Common myeloid progenitor, CD34-positive (primary cell): ENCODE measurements at regions of chr3 and their contacts with region 1.

Region 1: DNA sequence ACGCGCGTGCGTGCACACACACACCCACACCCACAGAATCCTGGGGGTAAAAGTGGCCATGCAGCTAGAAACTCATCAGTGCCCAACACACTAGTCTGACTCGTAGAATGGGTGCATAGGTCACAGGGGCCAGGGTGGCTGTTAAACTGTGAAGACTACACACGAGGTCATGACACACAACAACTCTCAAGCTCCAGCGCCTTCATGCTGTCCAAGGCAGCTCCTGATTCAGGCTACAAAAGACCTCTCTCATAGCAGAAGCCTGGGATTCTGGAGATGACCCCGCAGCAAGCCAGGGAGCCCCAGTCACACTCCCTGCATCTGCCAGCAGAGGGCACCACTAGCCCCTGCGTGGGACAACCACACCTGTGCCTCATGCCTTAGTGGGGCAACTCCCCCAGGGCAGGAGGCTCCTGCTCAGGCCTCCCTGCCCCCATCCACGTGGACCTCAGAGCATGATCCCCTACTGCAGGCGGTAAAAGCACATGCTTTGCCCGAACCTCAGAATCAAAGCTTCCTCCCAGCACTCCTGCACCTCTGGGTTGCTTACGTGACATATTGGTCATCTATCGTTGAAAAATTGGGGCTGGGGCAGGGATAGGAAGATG is 93.1 kb downstream of the LRIG1 start:
- DNase-seq: peak; percentile 36 to 62 (median 57)
- H3K4me3 ChIP-seq: no peak overlapping the region
- H3K27ac ChIP-seq: no peak overlapping the region
- H3K4me1 ChIP-seq: peaks cover 0 to 2% (median 0%) of the 10 kb centered on the region in 4 experiments
- H3K27me3 ChIP-seq: no peaks in the 10 kb centered on the region

Region 2: DNA sequence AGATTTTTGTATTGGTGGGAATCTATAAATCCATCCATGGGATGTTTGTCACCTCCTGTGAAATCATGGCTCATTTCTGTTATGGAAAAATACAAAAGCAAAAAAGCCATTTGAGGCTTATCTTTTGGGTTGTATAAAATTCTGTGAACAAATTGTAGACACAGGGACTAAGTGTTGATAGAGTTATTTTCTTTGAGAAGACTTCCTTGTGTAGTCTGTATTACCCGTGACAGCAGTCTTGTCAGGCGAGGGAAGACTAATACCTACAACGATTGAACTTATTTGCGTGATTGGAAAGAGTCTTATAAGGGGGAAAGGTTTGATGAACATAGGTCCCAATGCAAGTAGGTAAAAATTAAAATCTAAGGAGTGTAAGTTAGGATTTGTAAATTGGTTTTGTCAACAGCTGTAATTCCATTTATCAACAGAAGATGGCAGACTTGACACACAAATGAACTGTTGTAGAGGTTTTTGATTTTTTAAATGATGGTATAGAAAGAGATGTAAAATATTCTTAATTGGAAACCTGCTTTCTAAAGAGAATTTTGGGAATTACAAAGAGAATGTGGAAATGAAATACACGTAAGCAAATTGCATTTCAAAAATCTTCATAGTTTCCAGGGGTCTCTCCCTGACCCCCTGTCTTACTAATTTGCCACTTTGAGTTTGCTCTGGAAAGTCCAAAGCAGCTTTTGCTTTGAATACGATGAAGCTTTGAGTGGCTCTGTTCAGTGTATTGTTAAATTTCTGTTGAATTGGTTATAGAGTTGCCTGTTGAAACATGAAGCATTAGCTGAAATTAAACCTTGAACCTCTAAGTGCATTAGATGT is 153.7 kb before region 1 on chr3:
- CTCF ChIA-PET with region 1: interaction called, 14 read pairs
- POLR2A ChIA-PET with region 1: no interaction called
- DNase-seq: peak; percentile 36 to 65 (median 55)
- H3K4me3 ChIP-seq: no peak overlapping the region
- H3K27ac ChIP-seq: no peak overlapping the region
- H3K4me1 ChIP-seq: peaks cover 0 to 3% (median 1%) of the 10 kb centered on the region in 4 experiments
- H3K27me3 ChIP-seq: no peaks in the 10 kb centered on the region

Region 3: GRCh38 chr3:66450390-66451022 is 42.8 kb after region 1 on chr3:
- CTCF ChIA-PET with region 1: interaction called, 11 read pairs
- POLR2A ChIA-PET with region 1: no interaction called
- DNase-seq: peak in 2 of 3 donors; percentile 28 to 37
- H3K4me3 ChIP-seq: no peak overlapping the region
- H3K27ac ChIP-seq: no peak overlapping the region
- H3K4me1 ChIP-seq: peaks cover 4 to 19% (median 14%) of the 10 kb centered on the region in 4 experiments
- H3K27me3 ChIP-seq: no peaks in the 10 kb centered on the region

Region 4: GRCh38 chr3:66809595-66809958 is 401.9 kb after region 1 on chr3:
- CTCF ChIA-PET with region 1: interaction called, 107 read pairs
- POLR2A ChIA-PET with region 1: no interaction called
- DNase-seq: no peak
- H3K4me3 ChIP-seq: no peak overlapping the region
- H3K27ac ChIP-seq: no peak overlapping the region
- H3K4me1 ChIP-seq: peaks cover 0 to 14% (median 4%) of the 10 kb centered on the region in 4 experiments
- H3K27me3 ChIP-seq: no peaks in the 10 kb centered on the region

Region 5: DNA sequence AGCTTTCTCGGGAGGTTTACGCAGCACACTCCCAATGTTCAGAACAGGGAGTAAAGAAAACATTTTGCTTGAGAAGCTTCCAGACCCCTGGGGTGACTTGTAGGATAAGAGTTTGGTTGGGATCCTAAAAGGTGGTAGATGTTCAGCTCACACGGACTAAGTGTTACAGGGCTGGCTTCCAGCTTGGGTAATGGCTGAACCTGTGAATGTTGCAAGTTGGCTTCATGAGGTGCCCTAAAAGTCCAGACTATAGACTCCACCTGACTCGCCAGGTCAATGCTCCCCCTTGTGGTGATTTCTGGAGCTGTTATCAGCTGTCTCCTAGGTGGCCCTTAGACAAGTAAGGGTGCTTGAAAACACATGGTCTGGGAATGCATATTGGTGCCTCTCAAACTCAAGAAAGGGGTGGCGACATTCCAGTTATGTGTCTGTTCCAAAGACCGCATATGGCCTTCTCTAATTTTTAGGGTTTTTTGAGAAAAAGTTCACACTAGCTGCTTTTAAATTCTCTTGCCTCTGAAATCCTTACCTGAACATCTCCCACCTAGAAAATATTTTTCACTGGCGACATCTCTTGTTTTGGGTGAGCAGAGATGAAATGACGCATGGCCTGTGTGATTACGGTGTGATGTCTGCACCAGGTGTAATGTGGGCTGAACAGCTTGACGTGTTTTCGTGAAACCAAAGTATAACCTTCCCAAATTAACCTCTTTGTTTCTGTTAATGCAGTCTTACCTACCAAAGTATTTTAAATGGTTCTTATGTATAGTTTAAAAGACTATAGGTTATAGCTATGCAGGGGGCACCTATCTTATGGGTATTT is 414.7 kb after region 1 on chr3:
- CTCF ChIA-PET with region 1: interaction called, 107 read pairs
- POLR2A ChIA-PET with region 1: no interaction called
- DNase-seq: peak; percentile 57 to 79 (median 71)
- H3K4me3 ChIP-seq: no peak overlapping the region
- H3K27ac ChIP-seq: no peak overlapping the region
- H3K4me1 ChIP-seq: no peaks in the 10 kb centered on the region
- H3K27me3 ChIP-seq: peaks cover 0 to 3% (median 0%) of the 10 kb centered on the region in 5 experiments

Region 6: GRCh38 chr3:67006460-67006859 is 598.7 kb after region 1 on chr3:
- CTCF ChIA-PET with region 1: no interaction called
- POLR2A ChIA-PET with region 1: no interaction called
- DNase-seq: no peak
- H3K4me3 ChIP-seq: no peak overlapping the region
- H3K27ac ChIP-seq: no peak overlapping the region
- H3K4me1 ChIP-seq: no peaks in the 10 kb centered on the region
- H3K27me3 ChIP-seq: no peaks in the 10 kb centered on the region